ENCODE measurements at regions of chr5 and their contacts with region 1.

Region 1: GRCh38 chr5:95835682-95836385 is 13.3 kb upstream of the GLRX start:
- DNase-seq: no peak
- ATAC-seq: peak; percentile 45
- H3K4me3 ChIP-seq: peak overlapping the region; percentile 72
- H3K27ac ChIP-seq: peak overlapping the region; percentile 86
- H3K4me1 ChIP-seq: peaks cover 22% of the 10 kb centered on the region
- H3K27me3 ChIP-seq: no peaks in the 10 kb centered on the region
- CTCF ChIP-seq: no peak
- EP300 ChIP-seq: no peak
- POLR2A ChIP-seq: no peak
- RAD21 ChIP-seq: no peak

Region 2: DNA sequence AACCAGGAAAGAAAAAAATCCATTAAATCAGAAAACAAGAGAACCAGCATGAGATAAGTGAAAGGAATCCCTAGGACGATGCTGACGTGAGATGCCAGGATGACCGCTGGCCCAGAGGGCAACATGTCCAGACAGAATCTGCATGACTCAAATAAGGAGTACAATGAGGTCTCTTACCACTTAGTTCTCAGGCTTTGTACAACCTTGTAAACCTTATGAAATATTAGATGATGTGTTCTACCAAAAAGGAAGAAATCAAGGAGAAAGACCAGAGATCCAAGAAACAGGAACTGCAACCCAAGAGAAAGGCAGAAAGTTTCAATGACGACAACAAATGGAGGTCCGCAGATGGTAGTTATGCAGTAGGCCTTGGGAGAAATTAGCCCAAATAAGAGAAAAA is 218.8 kb before region 1 on chr5:
- CTCF ChIA-PET with region 1: no interaction called
- POLR2A ChIA-PET with region 1: no interaction called
- RAD21 ChIA-PET with region 1: no interaction called
- SMC1A ChIA-PET with region 1: no interaction called
- in situ Hi-C with region 1: no loop called
- intact Hi-C with region 1: no loop called
- DNase-seq: peak; percentile 73
- ATAC-seq: peak; percentile 39
- H3K4me3 ChIP-seq: no peak overlapping the region
- H3K27ac ChIP-seq: peak overlapping the region; percentile 17
- H3K4me1 ChIP-seq: peaks cover 20% of the 10 kb centered on the region
- H3K27me3 ChIP-seq: peaks cover 0 to 2% of the 10 kb centered on the region in 2 experiments; a peak in 1 of 4 replicates
- CTCF ChIP-seq: no peak
- EP300 ChIP-seq: peak; percentile 13 to 41; a peak in 1 of 4 replicates
- POLR2A ChIP-seq: no peak
- RAD21 ChIP-seq: no peak

Region 3: DNA sequence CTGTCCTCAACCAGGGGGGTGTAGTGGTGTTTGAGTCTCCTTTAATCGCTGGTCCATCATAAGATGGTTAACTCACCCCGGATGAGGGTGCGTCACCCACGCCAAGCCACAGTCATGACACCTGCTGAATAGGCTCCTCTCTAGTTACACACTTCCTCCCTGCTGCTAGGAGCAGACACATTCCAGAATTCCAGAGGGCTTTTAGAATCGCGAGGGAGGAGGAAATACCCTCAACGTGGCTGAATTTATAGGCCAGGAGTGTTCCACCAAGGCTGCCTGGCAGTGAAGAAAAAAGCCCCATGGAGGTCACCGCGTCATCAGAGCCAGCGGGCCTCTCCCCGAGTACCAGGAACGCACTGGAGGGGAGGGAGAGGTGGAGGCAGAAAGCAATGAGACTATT is 18.4 kb before region 1 on chr5:
- CTCF ChIA-PET with region 1: interaction called, 145 read pairs
- POLR2A ChIA-PET with region 1: interaction called, 43 read pairs
- RAD21 ChIA-PET with region 1: interaction called, 186 read pairs
- SMC1A ChIA-PET with region 1: interaction called, 320 read pairs
- in situ Hi-C with region 1: no loop called
- intact Hi-C with region 1: no loop called
- DNase-seq: no peak
- ATAC-seq: no peak
- H3K4me3 ChIP-seq: peak overlapping the region; percentile 87; the same call in 1 of the 2 replicates
- H3K27ac ChIP-seq: no peak overlapping the region
- H3K4me1 ChIP-seq: peaks cover 7% of the 10 kb centered on the region; the same call in 1 of the 2 replicates
- H3K27me3 ChIP-seq: no peaks in the 10 kb centered on the region
- CTCF ChIP-seq: no peak
- EP300 ChIP-seq: no peak
- POLR2A ChIP-seq: no peak
- RAD21 ChIP-seq: no peak

Measured in GM12878 (cell line).